Natural killer cell (primary cell): ENCODE measurements at regions of chr17 and their contacts with region 1.

Region 1: GRCh38 chr17:2796164-2797125 is at the start of gene RAP1GAP2:
- DNase-seq: peak; percentile 70 to 88
- ATAC-seq: peak; percentile 62 to 90 (median 76)
- H3K4me3 ChIP-seq: peak within 1 kb of the TSS; percentile 72
- H3K4me3 Mint-ChIP-seq: peak within 1 kb of the TSS; percentile 93
- H3K27ac ChIP-seq: peak within 1 kb of the TSS; percentile 7
- H3K27ac Mint-ChIP-seq: peak within 1 kb of the TSS; percentile 73 to 88
- H3K4me1 ChIP-seq: peaks cover 85% of the 10 kb centered on the region
- H3K4me1 Mint-ChIP-seq: peaks cover 84 to 94% of the 10 kb centered on the region in 2 donors
- H3K27me3 ChIP-seq: no peaks in the 10 kb centered on the region
- H3K27me3 Mint-ChIP-seq: no peaks in the 10 kb centered on the region
- CTCF ChIP-seq: no peak
- total RNA-seq, gene RAP1GAP2: 274 to 418 (median 390) TPM

Region 2: GRCh38 chr17:2814481-2815341 is 18.3 kb after region 1 on chr17:
- intact Hi-C with region 1: loop called (anchors 1 kb)
- DNase-seq: peak; percentile 91 to 98
- ATAC-seq: peak; percentile 65 to 87 (median 77)
- H3K4me3 ChIP-seq: peak overlapping the region; percentile 42
- H3K4me3 Mint-ChIP-seq: peak overlapping the region; percentile 72
- H3K27ac ChIP-seq: peak overlapping the region; percentile 79
- H3K27ac Mint-ChIP-seq: peak overlapping the region; percentile 89 to 92
- H3K4me1 ChIP-seq: peaks cover 79% of the 10 kb centered on the region
- H3K4me1 Mint-ChIP-seq: peaks cover 46 to 64% of the 10 kb centered on the region in 2 donors
- H3K27me3 ChIP-seq: no peaks in the 10 kb centered on the region
- H3K27me3 Mint-ChIP-seq: no peaks in the 10 kb centered on the region
- CTCF ChIP-seq: no peak